ENCODE measurements at regions of chr2 and their contacts with region 1.

Region 1: GRCh38 chr2:205754924-205755321 is 72.6 kb downstream of the NRP2 start:
- DNase-seq: no peak
- H3K4me3 ChIP-seq: no peak overlapping the region
- H3K27ac ChIP-seq: peak overlapping the region; percentile 78 to 88
- H3K4me1 ChIP-seq: peaks cover 12 to 29% of the 10 kb centered on the region in 2 donors
- H3K27me3 ChIP-seq: no peaks in the 10 kb centered on the region
- CTCF ChIP-seq: no peak

Region 2: DNA sequence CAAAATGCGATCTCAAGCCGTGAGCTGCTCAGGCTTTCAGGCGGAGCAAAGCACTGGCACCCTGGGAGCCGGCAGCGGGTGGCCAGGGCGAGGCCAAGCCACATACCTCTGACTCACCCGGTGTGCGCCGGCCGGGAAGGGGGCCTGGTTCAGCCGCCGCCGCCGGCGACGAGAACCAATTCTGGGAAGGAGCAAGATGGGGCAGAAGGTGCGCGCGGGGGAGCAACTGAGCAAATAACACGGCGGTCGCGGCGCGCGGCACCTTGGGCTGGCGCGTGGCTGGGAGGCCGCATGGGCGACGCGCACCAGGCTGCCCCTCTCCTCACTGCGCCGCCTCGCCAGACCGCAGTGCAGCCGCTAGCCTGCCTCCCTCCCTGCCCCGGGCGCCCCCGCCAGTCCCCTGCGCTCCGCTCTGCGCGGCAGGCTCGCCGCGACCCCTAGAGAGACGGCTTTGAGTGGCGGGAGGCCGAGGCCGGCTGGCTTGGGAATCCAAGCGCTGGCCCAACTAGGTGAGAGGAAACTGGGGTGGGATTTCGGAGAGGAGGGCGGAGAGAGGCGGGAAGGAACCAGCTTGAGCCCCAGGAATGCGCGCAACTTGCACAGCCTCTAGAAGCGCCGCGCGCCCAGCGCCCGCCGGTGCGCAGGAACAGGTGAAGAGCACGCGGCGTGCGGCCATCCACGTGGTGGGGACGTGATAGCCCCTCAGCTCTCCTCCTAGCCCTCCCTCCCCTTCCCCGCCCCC is 69.4 kb before region 1 on chr2:
- intact Hi-C with region 1: loop called (anchors 5 kb)
- DNase-seq: peak in 1 of 2 donors; percentile 74
- H3K4me3 ChIP-seq: peak overlapping the region; percentile 85 to 86
- H3K27ac ChIP-seq: peak overlapping the region; percentile 71
- H3K4me1 ChIP-seq: peaks cover 0 to 12% of the 10 kb centered on the region in 2 donors
- H3K27me3 ChIP-seq: no peaks in the 10 kb centered on the region
- CTCF ChIP-seq: peak in 1 of 3 experiments; percentile 4